B cell (primary cell): ENCODE measurements at regions of chr16 and their contacts with region 1.

Region 1: DNA sequence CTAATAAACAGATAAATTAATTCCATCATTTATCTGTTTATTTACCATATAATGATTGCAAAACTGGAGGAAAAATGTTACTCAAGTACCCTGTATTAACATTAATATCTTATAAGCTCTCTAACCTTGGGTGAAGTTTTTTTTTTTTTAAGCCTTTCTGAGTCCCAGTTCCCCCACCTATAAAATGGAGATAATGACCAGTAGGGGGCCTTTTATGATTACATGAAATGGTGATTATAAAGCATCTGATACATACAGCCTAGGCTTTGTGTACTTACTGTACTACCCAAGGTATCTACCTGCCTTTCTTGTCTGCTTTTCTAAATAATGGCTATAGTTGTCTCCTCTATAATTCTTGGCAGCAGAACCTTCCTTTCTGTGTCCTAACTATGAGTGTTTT is 22.6 kb downstream of the LRRC36 start:
- DNase-seq: peak; percentile 62
- ATAC-seq: peak; percentile 62
- H3K4me3 ChIP-seq: no peak overlapping the region
- H3K4me3 Mint-ChIP-seq: no peak overlapping the region
- H3K27ac ChIP-seq: no peak overlapping the region
- H3K27ac Mint-ChIP-seq: no peak overlapping the region
- H3K4me1 ChIP-seq: no peaks in the 10 kb centered on the region
- H3K4me1 Mint-ChIP-seq: no peaks in the 10 kb centered on the region
- H3K27me3 ChIP-seq: no peaks in the 10 kb centered on the region
- H3K27me3 Mint-ChIP-seq: peaks cover 3% of the 10 kb centered on the region
- CTCF ChIP-seq: peak; percentile 74

Region 2: GRCh38 chr16:67393035-67393787 is 44.0 kb after region 1 on chr16 and contains the start of gene TPPP3:
- CTCF ChIA-PET with region 1: interaction called, 3 read pairs
- POLR2A ChIA-PET with region 1: no interaction called
- intact Hi-C with region 1: loop called (anchors 10 kb)
- DNase-seq: no peak
- ATAC-seq: no peak
- H3K4me3 ChIP-seq: peak within 1 kb of the TSS in 3 of 5 experiments; percentile 21 to 39 (median 31)
- H3K4me3 Mint-ChIP-seq: peak within 1 kb of the TSS; percentile 85
- H3K27ac ChIP-seq: no peak within 1 kb of the TSS
- H3K27ac Mint-ChIP-seq: peak within 1 kb of the TSS; percentile 10
- H3K4me1 ChIP-seq: peaks cover 35 to 36% of the 10 kb centered on the region in 2 donors
- H3K4me1 Mint-ChIP-seq: peaks cover 26% of the 10 kb centered on the region
- H3K27me3 ChIP-seq: peaks cover 0 to 42% (median 31%) of the 10 kb centered on the region in 4 experiments
- H3K27me3 Mint-ChIP-seq: peaks cover 36% of the 10 kb centered on the region
- CTCF ChIP-seq: peak; percentile 38
- total RNA-seq, gene TPPP3: not detected in 2 replicates

Region 3: GRCh38 chr16:67470359-67470758 is 121.2 kb after region 1 on chr16:
- CTCF ChIA-PET with region 1: interaction called, 4 read pairs
- POLR2A ChIA-PET with region 1: no interaction called
- intact Hi-C with region 1: loop called (anchors 1 kb)
- DNase-seq: no peak
- ATAC-seq: no peak
- H3K4me3 ChIP-seq: no peak overlapping the region
- H3K4me3 Mint-ChIP-seq: no peak overlapping the region
- H3K27ac ChIP-seq: no peak overlapping the region
- H3K27ac Mint-ChIP-seq: no peak overlapping the region
- H3K4me1 ChIP-seq: peaks cover 15 to 30% of the 10 kb centered on the region in 2 donors
- H3K4me1 Mint-ChIP-seq: peaks cover 57% of the 10 kb centered on the region
- H3K27me3 ChIP-seq: no peaks in the 10 kb centered on the region
- H3K27me3 Mint-ChIP-seq: no peaks in the 10 kb centered on the region
- CTCF ChIP-seq: no peak